ENCODE measurements at regions of chr9 and their contacts with region 1.

Region 1: GRCh38 chr9:95510709-95511615 is 5.8 kb downstream of the PTCH1 start:
- DNase-seq: peak; percentile 91
- H3K4me3 ChIP-seq: peak overlapping the region; percentile 74 to 98 (median 94)
- H3K27ac ChIP-seq: peak overlapping the region; percentile 83
- H3K4me1 ChIP-seq: peaks cover 28% of the 10 kb centered on the region
- H3K27me3 ChIP-seq: peaks cover 0 to 2% of the 10 kb centered on the region in 2 experiments
- CTCF ChIP-seq: no peak
- POLR2A ChIP-seq: peak; percentile 69

Region 2: GRCh38 chr9:95189251-95190098 is 321.5 kb before region 1 on chr9:
- CTCF ChIA-PET with region 1: interaction called, 3 read pairs
- POLR2A ChIA-PET with region 1: no interaction called
- dilution Hi-C with region 1: no loop called
- intact Hi-C with region 1: loop called (anchors 2 kb)
- DNase-seq: peak; percentile 95
- H3K4me3 ChIP-seq: peak overlapping the region in 2 of 3 experiments; percentile 24 to 41
- H3K27ac ChIP-seq: peak overlapping the region; percentile 89
- H3K4me1 ChIP-seq: peaks cover 25% of the 10 kb centered on the region
- H3K27me3 ChIP-seq: no peaks in the 10 kb centered on the region
- CTCF ChIP-seq: no peak
- POLR2A ChIP-seq: no peak

Region 3: DNA sequence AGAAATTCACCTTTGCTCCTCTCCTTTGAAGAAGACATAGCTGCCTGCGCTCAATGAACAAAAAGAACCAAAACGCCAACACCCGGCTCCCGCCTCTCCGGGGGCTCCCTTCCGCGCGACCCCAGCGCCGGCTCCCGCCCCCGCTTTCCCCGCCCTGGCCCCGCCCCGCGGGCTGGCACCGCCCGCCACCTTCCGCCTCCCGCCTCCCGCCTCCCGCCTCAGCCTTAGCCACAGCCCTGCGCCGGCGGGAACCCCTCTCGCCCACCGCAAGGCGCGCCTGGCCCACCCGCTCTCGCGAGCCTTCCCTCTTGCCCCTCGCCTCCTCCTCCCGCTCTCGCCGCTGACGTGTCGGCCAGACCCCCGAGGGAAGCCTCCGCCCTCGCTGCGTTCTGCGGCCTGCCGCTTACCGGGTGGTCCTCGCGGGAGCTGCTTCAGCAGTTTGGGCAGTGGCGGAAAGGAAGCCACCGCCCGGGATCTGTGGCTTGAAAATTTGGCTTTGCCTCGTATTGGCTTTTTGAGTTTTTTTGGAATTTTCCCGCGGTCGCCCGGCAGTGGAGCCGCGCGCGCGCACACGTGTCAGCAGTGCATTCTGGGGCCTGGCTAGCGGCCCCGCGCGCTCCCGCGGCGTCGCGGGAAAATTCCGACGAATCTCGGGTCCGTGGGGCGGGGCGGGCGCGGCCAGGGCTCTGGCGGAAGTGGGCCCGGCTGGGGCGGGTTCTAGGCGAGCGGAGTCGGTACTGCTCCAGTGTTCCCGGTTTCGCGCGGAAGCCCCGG is 193.7 kb before region 1 on chr9 and contains the start of gene FANCC:
- CTCF ChIA-PET with region 1: interaction called, 3 read pairs
- POLR2A ChIA-PET with region 1: no interaction called
- dilution Hi-C with region 1: no loop called
- intact Hi-C with region 1: loop called (anchors 1 kb)
- DNase-seq: peak; percentile 89
- H3K4me3 ChIP-seq: peak within 1 kb of the TSS; percentile 76 to 96 (median 88)
- H3K27ac ChIP-seq: peak within 1 kb of the TSS; percentile 98
- H3K4me1 ChIP-seq: peaks cover 14% of the 10 kb centered on the region
- H3K27me3 ChIP-seq: peaks cover 0 to 5% of the 10 kb centered on the region in 2 experiments
- CTCF ChIP-seq: no peak
- POLR2A ChIP-seq: peak; percentile 72
- total RNA-seq, gene FANCC: 13.1 and 14.0 TPM in 2 replicates

Region 4: GRCh38 chr9:95363051-95363841 is 147.7 kb before region 1 on chr9:
- CTCF ChIA-PET with region 1: no interaction called
- POLR2A ChIA-PET with region 1: no interaction called
- dilution Hi-C with region 1: no loop called
- intact Hi-C with region 1: no loop called
- DNase-seq: no peak
- H3K4me3 ChIP-seq: no peak overlapping the region
- H3K27ac ChIP-seq: no peak overlapping the region
- H3K4me1 ChIP-seq: no peaks in the 10 kb centered on the region
- H3K27me3 ChIP-seq: peaks cover 5 to 16% of the 10 kb centered on the region in 2 experiments
- CTCF ChIP-seq: no peak
- POLR2A ChIP-seq: no peak

Region 5: GRCh38 chr9:95399261-95399660 is 111.7 kb before region 1 on chr9:
- CTCF ChIA-PET with region 1: no interaction called
- POLR2A ChIA-PET with region 1: no interaction called
- dilution Hi-C with region 1: no loop called
- intact Hi-C with region 1: no loop called
- DNase-seq: no peak
- H3K4me3 ChIP-seq: no peak overlapping the region
- H3K27ac ChIP-seq: no peak overlapping the region
- H3K4me1 ChIP-seq: no peaks in the 10 kb centered on the region
- H3K27me3 ChIP-seq: no peaks in the 10 kb centered on the region
- CTCF ChIP-seq: no peak
- POLR2A ChIP-seq: no peak

Region 6: DNA sequence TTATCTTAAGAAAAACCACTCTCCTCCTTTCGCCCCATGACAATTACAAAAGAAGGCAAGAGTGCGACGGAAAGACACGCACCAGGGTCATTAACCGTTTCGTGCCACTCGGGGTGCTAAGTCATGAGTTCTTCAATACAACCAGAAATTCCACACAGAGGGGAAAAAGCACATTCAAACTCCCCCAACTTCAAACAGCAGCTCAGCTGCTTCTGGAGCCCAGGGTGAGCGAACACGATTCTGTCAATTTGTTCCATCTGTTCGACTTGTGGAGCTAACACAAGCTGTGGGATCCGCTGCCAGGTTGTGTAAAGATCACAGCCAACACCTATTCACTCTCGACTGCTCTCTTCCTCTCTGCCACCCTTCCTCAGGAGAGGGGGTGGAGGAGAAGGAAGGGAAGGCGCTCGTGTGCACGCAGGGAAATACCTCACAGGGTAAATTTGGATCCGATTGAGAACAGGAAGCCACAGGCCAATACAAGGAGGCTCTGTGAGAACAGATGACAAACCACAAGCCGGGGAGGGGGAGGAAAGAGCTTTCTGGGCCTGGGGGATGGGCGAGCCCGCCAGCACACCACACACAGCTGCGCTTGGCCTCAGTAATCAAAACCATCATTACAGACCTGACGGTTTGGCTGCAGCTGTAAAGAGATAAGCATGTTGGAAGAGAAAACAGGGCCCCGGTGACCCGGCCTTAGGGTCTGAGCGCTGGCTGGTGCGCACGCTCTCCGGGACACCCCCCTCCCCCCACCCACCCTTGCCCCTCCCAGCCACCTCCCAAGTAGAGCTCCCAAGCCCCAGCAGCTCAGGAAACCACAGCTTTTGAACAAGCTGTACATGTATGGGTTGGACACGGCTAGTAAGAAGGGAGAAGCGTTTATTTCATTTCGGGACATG is 48.5 kb before region 1 on chr9:
- CTCF ChIA-PET with region 1: interaction called, 10 read pairs
- POLR2A ChIA-PET with region 1: no interaction called
- dilution Hi-C with region 1: no loop called
- intact Hi-C with region 1: loop called (anchors 1 kb)
- DNase-seq: peak; percentile 82
- H3K4me3 ChIP-seq: peak overlapping the region in 2 of 3 experiments; percentile 5 to 23
- H3K27ac ChIP-seq: peak overlapping the region; percentile 39
- H3K4me1 ChIP-seq: peaks cover 9% of the 10 kb centered on the region
- H3K27me3 ChIP-seq: no peaks in the 10 kb centered on the region
- CTCF ChIP-seq: no peak
- POLR2A ChIP-seq: no peak

Region 7: GRCh38 chr9:95499847-95500246 is 11.1 kb before region 1 on chr9:
- CTCF ChIA-PET with region 1: no interaction called
- POLR2A ChIA-PET with region 1: no interaction called
- dilution Hi-C with region 1: no loop called
- intact Hi-C with region 1: no loop called
- DNase-seq: no peak
- H3K4me3 ChIP-seq: no peak overlapping the region
- H3K27ac ChIP-seq: no peak overlapping the region
- H3K4me1 ChIP-seq: no peaks in the 10 kb centered on the region
- H3K27me3 ChIP-seq: no peaks in the 10 kb centered on the region
- CTCF ChIP-seq: no peak
- POLR2A ChIP-seq: no peak

Region 8: GRCh38 chr9:95545831-95546567 is 35.0 kb after region 1 on chr9:
- CTCF ChIA-PET with region 1: no interaction called
- POLR2A ChIA-PET with region 1: no interaction called
- dilution Hi-C with region 1: no loop called
- intact Hi-C with region 1: no loop called
- DNase-seq: no peak
- H3K4me3 ChIP-seq: no peak overlapping the region
- H3K27ac ChIP-seq: no peak overlapping the region
- H3K4me1 ChIP-seq: no peaks in the 10 kb centered on the region
- H3K27me3 ChIP-seq: peaks cover 1 to 6% of the 10 kb centered on the region in 2 experiments
- CTCF ChIP-seq: no peak
- POLR2A ChIP-seq: no peak

Region 9: GRCh38 chr9:95626885-95627558 is 116.1 kb after region 1 on chr9:
- CTCF ChIA-PET with region 1: interaction called, 3 read pairs
- POLR2A ChIA-PET with region 1: no interaction called
- dilution Hi-C with region 1: no loop called
- intact Hi-C with region 1: loop called (anchors 2 kb)
- DNase-seq: peak; percentile 71
- H3K4me3 ChIP-seq: peak overlapping the region in 1 of 3 experiments; percentile 18
- H3K27ac ChIP-seq: peak overlapping the region; percentile 82
- H3K4me1 ChIP-seq: peaks cover 23% of the 10 kb centered on the region
- H3K27me3 ChIP-seq: no peaks in the 10 kb centered on the region
- CTCF ChIP-seq: no peak
- POLR2A ChIP-seq: no peak

Region 10: GRCh38 chr9:95793924-95794828 is 283.2 kb after region 1 on chr9:
- CTCF ChIA-PET with region 1: no interaction called
- POLR2A ChIA-PET with region 1: no interaction called
- dilution Hi-C with region 1: no loop called
- intact Hi-C with region 1: loop called (anchors 2 kb)
- DNase-seq: peak; percentile 97
- H3K4me3 ChIP-seq: no peak overlapping the region
- H3K27ac ChIP-seq: peak overlapping the region; percentile 92
- H3K4me1 ChIP-seq: peaks cover 22% of the 10 kb centered on the region
- H3K27me3 ChIP-seq: no peaks in the 10 kb centered on the region
- CTCF ChIP-seq: no peak
- POLR2A ChIP-seq: peak; percentile 54

Region 11: DNA sequence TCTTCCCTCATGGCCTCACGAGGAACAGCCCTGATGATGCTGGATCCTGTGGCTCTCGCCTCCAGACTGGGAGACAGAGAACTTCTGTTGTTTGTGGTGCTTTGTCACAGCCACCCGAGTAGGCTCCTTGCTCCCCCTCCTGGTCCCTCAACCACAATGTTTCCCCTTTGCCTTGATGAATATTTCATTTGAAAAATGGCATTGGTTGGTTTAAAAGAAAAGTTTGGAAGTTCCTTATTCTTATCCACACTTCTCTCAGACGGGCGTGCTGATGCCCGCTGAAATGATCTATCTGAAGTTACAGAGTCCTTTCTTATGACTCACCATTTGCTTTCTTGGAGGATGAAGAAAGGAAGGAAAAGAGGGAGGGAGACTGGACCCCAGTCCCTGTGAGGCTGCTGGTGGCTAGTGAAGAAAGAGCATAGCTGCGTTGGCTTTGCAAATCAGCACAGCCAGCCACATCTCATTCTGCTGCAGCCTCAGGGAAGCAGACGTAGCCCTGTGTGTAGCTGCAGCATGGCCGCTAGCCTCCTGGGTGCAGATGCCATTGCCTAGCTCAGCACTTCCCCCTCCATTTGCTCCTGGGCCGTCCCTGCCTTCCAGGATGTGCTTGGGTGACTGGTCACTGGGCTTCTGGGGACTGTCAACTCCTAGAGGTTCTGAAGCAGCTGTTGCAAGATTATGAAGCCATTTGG is 550.5 kb after region 1 on chr9:
- CTCF ChIA-PET with region 1: no interaction called
- POLR2A ChIA-PET with region 1: no interaction called
- dilution Hi-C with region 1: no loop called
- intact Hi-C with region 1: loop called (anchors 5 kb)
- DNase-seq: peak; percentile 65
- H3K4me3 ChIP-seq: no peak overlapping the region
- H3K27ac ChIP-seq: no peak overlapping the region
- H3K4me1 ChIP-seq: peaks cover 9% of the 10 kb centered on the region
- H3K27me3 ChIP-seq: no peaks in the 10 kb centered on the region
- CTCF ChIP-seq: peak; percentile 55 to 57
- POLR2A ChIP-seq: no peak

Measured in endothelial cell of umbilical vein (primary cell).